ENCODE measurements at regions of chr16 and their contacts with region 1.

Region 1: DNA sequence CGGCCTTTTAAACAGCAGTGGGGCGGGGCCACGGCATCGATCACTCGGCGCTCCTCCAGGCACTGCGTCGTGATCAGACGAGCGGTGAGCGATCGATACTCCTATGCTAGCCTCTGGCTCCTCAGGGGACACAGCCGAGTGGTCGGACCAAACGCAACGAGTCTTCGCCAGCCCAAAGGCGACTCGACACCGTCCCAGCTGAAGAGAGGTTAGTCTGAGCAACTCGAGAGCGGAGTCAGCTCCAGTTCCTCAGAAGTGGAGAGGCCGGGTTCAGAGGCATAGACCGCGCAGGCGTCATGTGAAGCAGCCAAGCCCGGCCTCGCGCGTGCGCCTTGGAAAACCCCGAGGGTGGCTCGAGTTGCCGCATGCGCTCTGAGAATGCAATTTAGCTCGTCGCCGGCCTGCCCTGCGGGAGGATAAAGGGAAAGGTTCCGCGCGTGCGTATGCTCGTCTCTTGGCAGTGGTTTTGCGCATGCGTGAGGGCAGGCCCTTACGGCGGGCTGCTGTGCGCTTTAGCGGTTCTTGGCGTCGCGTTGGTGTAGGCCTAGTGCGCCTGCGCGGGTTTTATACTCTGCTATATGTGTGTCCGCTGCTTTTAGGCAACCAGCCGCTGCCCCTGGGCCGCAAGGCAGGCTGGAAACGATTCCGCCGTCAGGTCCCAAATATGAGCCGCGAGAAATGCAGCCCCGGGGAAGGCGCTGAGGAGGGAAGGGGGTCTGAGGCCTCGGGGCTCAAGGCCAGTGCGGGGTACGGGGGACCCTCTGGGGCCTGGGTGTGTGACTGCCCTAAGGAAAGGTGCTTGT is at the start of gene KDM8:
- DNase-seq: peak; percentile 98 to 100 (median 100)
- ATAC-seq: peak; percentile 77 to 82 (median 82)
- H3K4me3 ChIP-seq: peak within 1 kb of the TSS; percentile 76 to 83
- H3K4me3 Mint-ChIP-seq: peak within 1 kb of the TSS; percentile 85 to 97 (median 96)
- H3K27ac ChIP-seq: peak within 1 kb of the TSS; percentile 97
- H3K27ac Mint-ChIP-seq: peak within 1 kb of the TSS; percentile 100
- H3K4me1 ChIP-seq: peaks cover 37 to 53% of the 10 kb centered on the region in 2 experiments
- H3K4me1 Mint-ChIP-seq: peaks cover 51 to 62% (median 53%) of the 10 kb centered on the region in 3 donors
- H3K27me3 ChIP-seq: no peaks in the 10 kb centered on the region
- H3K27me3 Mint-ChIP-seq: no peaks in the 10 kb centered on the region
- total RNA-seq, gene KDM8: 13.4 to 25.6 (median 23.5) TPM

Region 2: DNA sequence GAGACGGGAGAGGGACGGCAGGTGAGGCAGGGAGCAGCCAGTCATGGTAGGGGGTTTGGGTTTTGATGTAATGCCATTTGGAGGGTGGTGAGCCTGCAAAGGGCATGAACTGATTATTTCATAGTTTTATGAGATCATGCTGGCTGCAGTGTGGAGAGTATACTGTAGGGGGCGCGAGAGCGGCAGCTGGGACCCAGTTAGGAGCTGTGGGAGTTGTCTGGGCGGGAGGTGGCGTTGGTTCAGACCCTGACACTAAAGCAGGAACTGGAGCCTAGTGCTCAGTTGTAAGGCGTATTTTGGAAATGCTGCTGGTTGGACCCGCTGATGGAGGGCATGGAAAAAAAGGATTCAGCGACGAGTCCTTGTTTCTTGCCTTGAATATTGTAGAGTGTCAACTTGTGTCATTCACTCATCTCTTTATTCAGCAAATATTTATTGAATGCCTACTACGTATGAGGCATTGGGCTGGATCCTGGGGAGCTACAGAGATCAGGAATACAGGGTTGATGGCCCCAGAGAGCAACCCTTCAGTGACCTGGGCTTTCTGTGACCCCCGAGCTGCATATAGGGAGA is 24.0 kb before region 1 on chr16:
- CTCF ChIA-PET with region 1: interaction called in 1 of 2 experiments, 16 read pairs
- POLR2A ChIA-PET with region 1: interaction called in 1 of 2 experiments, 3 read pairs
- DNase-seq: peak; percentile 72 to 92 (median 85)
- ATAC-seq: peak; percentile 94 to 98 (median 96)
- H3K4me3 ChIP-seq: no peak overlapping the region
- H3K4me3 Mint-ChIP-seq: peak overlapping the region in 1 of 3 donors; percentile 24
- H3K27ac ChIP-seq: no peak overlapping the region
- H3K27ac Mint-ChIP-seq: peak overlapping the region; percentile 74 to 88
- H3K4me1 ChIP-seq: peaks cover 17 to 27% of the 10 kb centered on the region in 2 experiments
- H3K4me1 Mint-ChIP-seq: peaks cover 30 to 50% (median 33%) of the 10 kb centered on the region in 3 donors
- H3K27me3 ChIP-seq: no peaks in the 10 kb centered on the region
- H3K27me3 Mint-ChIP-seq: no peaks in the 10 kb centered on the region

Region 3: DNA sequence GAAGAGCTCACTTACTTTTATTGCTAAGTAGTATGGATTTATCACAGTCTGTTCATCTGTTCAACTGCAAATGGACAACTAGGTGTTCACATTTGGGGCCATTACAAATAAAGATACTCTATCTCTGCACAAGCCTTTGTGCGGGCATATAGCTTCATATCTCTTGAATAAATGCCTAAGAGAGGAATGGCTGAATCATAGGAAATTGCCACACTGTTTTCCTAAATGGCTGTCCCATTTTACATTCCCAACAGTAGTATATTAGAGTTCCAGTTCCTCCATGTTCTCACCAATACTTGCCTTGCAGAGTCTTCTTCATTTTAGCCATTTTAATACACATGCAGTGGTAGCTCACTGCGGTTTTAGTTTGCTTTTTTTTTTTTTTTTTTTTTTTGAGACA is 44.4 kb after region 1 on chr16:
- CTCF ChIA-PET with region 1: no interaction called
- POLR2A ChIA-PET with region 1: interaction called in 1 of 2 experiments, 11 read pairs
- DNase-seq: no peak
- ATAC-seq: no peak
- H3K4me3 ChIP-seq: no peak overlapping the region
- H3K4me3 Mint-ChIP-seq: no peak overlapping the region
- H3K27ac ChIP-seq: no peak overlapping the region
- H3K27ac Mint-ChIP-seq: peak overlapping the region in 1 of 2 donors; percentile 52
- H3K4me1 ChIP-seq: peaks cover 14 to 32% of the 10 kb centered on the region in 2 experiments
- H3K4me1 Mint-ChIP-seq: peaks cover 53 to 73% (median 65%) of the 10 kb centered on the region in 3 donors
- H3K27me3 ChIP-seq: no peaks in the 10 kb centered on the region
- H3K27me3 Mint-ChIP-seq: no peaks in the 10 kb centered on the region